Activated CD4-positive, alpha-beta T cell treated with anti-CD3 and anti-CD28 coated beads for 36 hours (primary cell): ENCODE measurements at regions of chr22 and their contacts with region 1.

Region 1: GRCh38 chr22:46019351-46019750 is 42.4 kb upstream of the WNT7B start:
- DNase-seq: peak; percentile 1
- ATAC-seq: no peak
- H3K4me3 Mint-ChIP-seq: no peak overlapping the region
- H3K27ac Mint-ChIP-seq: no peak overlapping the region
- H3K4me1 Mint-ChIP-seq: no peaks in the 10 kb centered on the region
- H3K27me3 Mint-ChIP-seq: no peaks in the 10 kb centered on the region

Region 2: GRCh38 chr22:46006379-46007002 is 12.9 kb before region 1 on chr22:
- CTCF ChIA-PET with region 1: interaction called, 15 read pairs
- POLR2A ChIA-PET with region 1: interaction called, 3 read pairs
- intact Hi-C with region 1: no loop called
- DNase-seq: peak; percentile 94
- ATAC-seq: peak; percentile 91
- H3K4me3 Mint-ChIP-seq: no peak overlapping the region
- H3K27ac Mint-ChIP-seq: no peak overlapping the region
- H3K4me1 Mint-ChIP-seq: peaks cover 7% of the 10 kb centered on the region
- H3K27me3 Mint-ChIP-seq: no peaks in the 10 kb centered on the region

Region 3: DNA sequence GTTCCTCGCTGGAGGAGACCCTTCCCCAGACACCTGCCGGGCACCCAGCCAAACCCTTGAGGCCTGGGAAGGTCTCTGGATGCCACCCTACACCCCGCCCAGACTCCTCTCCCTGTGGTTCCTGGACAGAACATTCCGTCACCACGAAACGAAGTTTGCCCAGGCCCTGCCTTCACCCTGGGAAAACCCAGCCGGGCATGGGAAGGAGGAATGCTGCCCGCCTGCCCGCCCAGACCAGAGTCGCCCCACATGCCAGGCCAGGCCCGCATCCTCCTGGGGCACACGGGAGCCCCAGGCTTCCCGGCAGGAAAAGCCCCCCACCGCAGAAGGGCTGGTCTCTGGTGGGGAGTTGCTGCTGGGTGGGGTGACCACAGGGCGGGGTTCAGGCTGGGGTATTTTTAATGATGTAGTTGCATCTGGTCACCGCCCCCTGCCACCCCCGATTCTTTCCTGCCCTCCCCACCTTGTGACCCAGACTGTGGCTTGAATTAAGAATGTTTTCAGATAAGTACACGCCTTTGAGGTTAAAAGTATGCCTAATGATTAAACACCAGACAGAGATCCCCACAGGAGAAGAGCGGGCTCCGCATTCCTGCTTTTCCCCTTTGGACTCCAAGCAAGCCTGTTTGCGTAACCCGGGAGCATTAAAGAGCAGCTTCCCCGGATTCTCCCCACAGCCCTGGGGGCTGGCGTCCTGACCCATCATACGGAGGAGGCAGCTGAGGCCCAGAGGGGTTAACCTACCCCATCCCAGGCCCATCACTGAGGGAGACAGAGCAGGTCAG is 86.3 kb after region 1 on chr22:
- CTCF ChIA-PET with region 1: no interaction called
- POLR2A ChIA-PET with region 1: no interaction called
- intact Hi-C with region 1: no loop called
- DNase-seq: no peak
- ATAC-seq: no peak
- H3K4me3 Mint-ChIP-seq: no peak overlapping the region
- H3K27ac Mint-ChIP-seq: no peak overlapping the region
- H3K4me1 Mint-ChIP-seq: no peaks in the 10 kb centered on the region
- H3K27me3 Mint-ChIP-seq: no peaks in the 10 kb centered on the region